ENCODE measurements at regions of chr16 and their contacts with region 1.

Region 1: DNA sequence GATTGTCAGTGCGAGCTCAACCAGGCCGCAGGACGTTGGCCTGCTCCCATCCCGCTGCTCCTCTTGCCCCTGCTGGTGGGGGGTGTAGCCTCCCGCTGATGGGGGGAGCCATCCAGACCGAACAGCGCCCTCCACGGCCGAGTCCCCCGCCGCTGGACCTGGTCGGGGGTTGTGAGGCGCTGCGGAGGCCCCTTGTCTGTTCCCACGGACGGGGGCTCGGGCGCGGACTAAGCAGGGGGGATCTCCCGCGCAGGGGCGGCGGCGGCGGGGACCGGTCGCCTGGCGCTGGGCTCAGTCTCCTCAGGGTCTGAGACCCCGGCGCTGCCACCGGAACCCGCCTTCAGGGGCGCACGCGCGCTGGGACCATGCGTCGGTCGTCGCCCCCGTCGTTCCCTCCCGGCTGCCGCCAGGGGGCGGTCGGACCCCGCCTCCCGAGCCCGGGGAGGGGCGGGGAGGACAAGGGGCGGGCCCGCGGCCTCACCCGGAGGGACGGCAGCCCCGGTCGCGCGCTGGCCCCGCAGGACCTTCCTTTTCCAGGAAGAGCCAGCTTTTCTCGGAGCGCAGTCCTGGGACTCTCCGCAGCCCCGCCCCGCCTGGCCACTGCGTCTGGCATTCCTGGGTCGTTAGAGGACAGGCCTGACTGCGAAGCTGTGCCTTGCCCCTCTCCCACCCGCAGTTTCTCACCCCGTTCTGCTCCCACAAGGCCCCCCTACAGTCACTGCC is 6.3 kb upstream of the IL32 start:
- DNase-seq: peak; percentile 87
- H3K27ac ChIP-seq: peak overlapping the region; percentile 68
- CTCF ChIP-seq: peak; percentile 91

Region 2: GRCh38 chr16:2983706-2984136 is 75.4 kb before region 1 on chr16:
- CTCF ChIA-PET with region 1: no interaction called
- POLR2A ChIA-PET with region 1: no interaction called
- DNase-seq: peak; percentile 89
- H3K27ac ChIP-seq: peak overlapping the region; percentile 66
- CTCF ChIP-seq: peak; percentile 96

Region 3: DNA sequence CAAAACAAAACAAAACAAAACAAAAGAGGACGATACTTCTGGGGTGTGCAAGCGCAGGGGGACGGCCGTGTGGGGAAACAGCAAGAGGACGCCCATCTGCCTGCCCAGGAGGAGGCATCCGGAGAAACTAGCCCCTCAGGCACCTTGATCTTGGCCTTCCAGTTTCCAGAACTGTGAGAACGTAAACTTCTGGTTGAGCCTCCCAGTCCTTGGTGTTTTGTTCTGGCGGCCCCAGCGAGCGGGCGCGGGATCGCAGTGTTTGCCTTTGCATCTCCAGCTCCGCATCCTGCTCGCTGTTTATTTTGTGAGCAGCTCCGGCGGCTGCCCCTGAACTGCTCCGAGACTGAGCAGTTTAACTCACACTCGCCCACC is 13.8 kb before region 1 on chr16:
- CTCF ChIA-PET with region 1: interaction called, 22 read pairs
- POLR2A ChIA-PET with region 1: interaction called, 3 read pairs
- DNase-seq: no peak
- H3K27ac ChIP-seq: no peak overlapping the region
- CTCF ChIP-seq: no peak

Region 4: GRCh38 chr16:3129137-3130131 is 70.3 kb after region 1 on chr16:
- CTCF ChIA-PET with region 1: interaction called, 48 read pairs
- POLR2A ChIA-PET with region 1: interaction called, 4 read pairs
- DNase-seq: peak; percentile 33
- H3K27ac ChIP-seq: peak overlapping the region; percentile 84
- CTCF ChIP-seq: peak; percentile 95